ENCODE measurements at regions of chr1 and their contacts with region 1.

Region 1: GRCh38 chr1:20376880-20377494 is 86.3 kb downstream of the VWA5B1 start:
- DNase-seq: peak; percentile 81
- H3K4me3 ChIP-seq: no peak overlapping the region
- H3K27ac ChIP-seq: peak overlapping the region; percentile 5
- H3K4me1 ChIP-seq: peaks cover 60% of the 10 kb centered on the region
- CTCF ChIP-seq: peak; percentile 91

Region 2: GRCh38 chr1:20322081-20322824 is 54.7 kb before region 1 on chr1:
- CTCF ChIA-PET with region 1: interaction called, 16 read pairs
- POLR2A ChIA-PET with region 1: no interaction called
- intact Hi-C with region 1: no loop called
- DNase-seq: peak; percentile 78
- H3K4me3 ChIP-seq: peak overlapping the region; percentile 13
- H3K27ac ChIP-seq: peak overlapping the region; percentile 63
- H3K4me1 ChIP-seq: peaks cover 48% of the 10 kb centered on the region
- CTCF ChIP-seq: no peak

Region 3: GRCh38 chr1:20390589-20391331 is 13.8 kb after region 1 on chr1:
- CTCF ChIA-PET with region 1: no interaction called
- POLR2A ChIA-PET with region 1: interaction called, 10 read pairs
- intact Hi-C with region 1: no loop called
- DNase-seq: no peak
- H3K4me3 ChIP-seq: no peak overlapping the region
- H3K27ac ChIP-seq: no peak overlapping the region
- H3K4me1 ChIP-seq: peaks cover 44% of the 10 kb centered on the region
- CTCF ChIP-seq: no peak

Region 4: GRCh38 chr1:20405893-20406604 is 29.1 kb after region 1 on chr1:
- CTCF ChIA-PET with region 1: interaction called, 3 read pairs
- POLR2A ChIA-PET with region 1: interaction called, 43 read pairs
- intact Hi-C with region 1: no loop called
- DNase-seq: peak; percentile 95
- H3K4me3 ChIP-seq: peak overlapping the region; percentile 67
- H3K27ac ChIP-seq: peak overlapping the region; percentile 99
- H3K4me1 ChIP-seq: peaks cover 87% of the 10 kb centered on the region
- CTCF ChIP-seq: no peak

Region 5: GRCh38 chr1:20732588-20733360 is 355.8 kb after region 1 on chr1 and contains the start of gene SH2D5:
- CTCF ChIA-PET with region 1: no interaction called
- POLR2A ChIA-PET with region 1: no interaction called
- intact Hi-C with region 1: no loop called
- DNase-seq: peak; percentile 65
- H3K4me3 ChIP-seq: peak within 1 kb of the TSS; percentile 67
- H3K27ac ChIP-seq: no peak within 1 kb of the TSS
- H3K4me1 ChIP-seq: peaks cover 14% of the 10 kb centered on the region
- CTCF ChIP-seq: peak; percentile 64
- total RNA-seq, gene SH2D5: 0.46 TPM in 1 of 2 replicates, not detected in the other